ENCODE measurements at regions of chr13 and their contacts with region 1.

Region 1: GRCh38 chr13:109211616-109212015 is 574.8 kb downstream of the IRS2 start:
- DNase-seq: peak; percentile 87
- ATAC-seq: peak; percentile 78
- H3K4me3 ChIP-seq: peak overlapping the region in 1 of 2 experiments; percentile 13; a peak in 1 of 4 replicates
- H3K27ac ChIP-seq: peak overlapping the region; percentile 45; the same call in 1 of the 2 replicates
- H3K4me1 ChIP-seq: peaks cover 24 to 87% of the 10 kb centered on the region in 2 experiments
- H3K27me3 ChIP-seq: no peaks in the 10 kb centered on the region
- CTCF ChIP-seq: no peak
- POLR2A ChIP-seq: no peak
- RAD21 ChIP-seq: peak; percentile 14; the same call in 1 of the 2 replicates

Region 2: DNA sequence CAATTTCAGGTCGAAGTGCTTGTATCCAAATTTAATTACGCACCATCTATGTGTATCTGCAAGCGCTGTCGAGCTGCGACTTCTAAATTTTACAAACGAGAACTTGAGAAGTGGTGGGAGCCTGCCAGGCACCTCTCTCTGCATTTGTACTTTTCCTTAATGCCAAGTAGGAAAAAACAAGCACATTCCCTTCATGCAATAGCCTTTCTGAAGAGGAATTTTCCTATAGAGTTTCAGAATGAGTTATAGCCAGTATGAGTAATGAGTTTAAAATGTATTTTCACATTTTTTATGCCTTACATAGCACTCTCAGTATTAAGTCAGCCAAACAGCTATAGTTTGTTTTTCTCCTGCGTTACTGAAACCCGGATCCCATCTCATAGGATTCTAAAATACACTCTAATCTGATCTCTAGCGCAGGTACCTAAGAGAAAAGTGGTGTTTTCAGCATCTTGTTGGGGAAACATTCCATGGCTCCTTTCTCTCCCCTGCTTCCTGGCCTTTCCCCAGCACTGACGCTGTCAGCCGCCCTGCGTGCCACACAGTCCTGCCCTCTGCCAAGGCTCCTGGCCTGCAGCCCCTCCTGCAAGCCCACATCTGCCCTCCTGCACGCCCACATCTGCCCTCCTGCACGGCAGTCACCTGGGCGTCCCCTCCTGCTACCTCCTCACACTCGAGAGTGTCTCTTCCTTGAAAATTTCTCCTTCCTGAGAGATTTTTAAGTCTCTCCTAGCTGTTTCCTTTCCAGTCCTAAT is 55.3 kb before region 1 on chr13:
- CTCF ChIA-PET with region 1: no interaction called
- POLR2A ChIA-PET with region 1: no interaction called
- RAD21 ChIA-PET with region 1: no interaction called
- intact Hi-C with region 1: loop called (anchors 5 kb)
- DNase-seq: no peak
- ATAC-seq: peak; percentile 66
- H3K4me3 ChIP-seq: peak overlapping the region; percentile 25 to 49
- H3K27ac ChIP-seq: peak overlapping the region; percentile 56
- H3K4me1 ChIP-seq: peaks cover 42 to 89% of the 10 kb centered on the region in 2 experiments
- H3K27me3 ChIP-seq: no peaks in the 10 kb centered on the region
- CTCF ChIP-seq: no peak
- POLR2A ChIP-seq: no peak
- RAD21 ChIP-seq: no peak

Region 3: GRCh38 chr13:109309625-109310363 is 98.2 kb after region 1 on chr13:
- CTCF ChIA-PET with region 1: no interaction called
- POLR2A ChIA-PET with region 1: no interaction called
- RAD21 ChIA-PET with region 1: no interaction called
- intact Hi-C with region 1: no loop called
- DNase-seq: no peak
- ATAC-seq: no peak
- H3K4me3 ChIP-seq: no peak overlapping the region
- H3K27ac ChIP-seq: no peak overlapping the region
- H3K4me1 ChIP-seq: no peaks in the 10 kb centered on the region
- H3K27me3 ChIP-seq: no peaks in the 10 kb centered on the region
- CTCF ChIP-seq: no peak
- POLR2A ChIP-seq: no peak
- RAD21 ChIP-seq: no peak